IMR-90 (cell line): ENCODE measurements at regions of chr15 and their contacts with region 1.

Region 1: DNA sequence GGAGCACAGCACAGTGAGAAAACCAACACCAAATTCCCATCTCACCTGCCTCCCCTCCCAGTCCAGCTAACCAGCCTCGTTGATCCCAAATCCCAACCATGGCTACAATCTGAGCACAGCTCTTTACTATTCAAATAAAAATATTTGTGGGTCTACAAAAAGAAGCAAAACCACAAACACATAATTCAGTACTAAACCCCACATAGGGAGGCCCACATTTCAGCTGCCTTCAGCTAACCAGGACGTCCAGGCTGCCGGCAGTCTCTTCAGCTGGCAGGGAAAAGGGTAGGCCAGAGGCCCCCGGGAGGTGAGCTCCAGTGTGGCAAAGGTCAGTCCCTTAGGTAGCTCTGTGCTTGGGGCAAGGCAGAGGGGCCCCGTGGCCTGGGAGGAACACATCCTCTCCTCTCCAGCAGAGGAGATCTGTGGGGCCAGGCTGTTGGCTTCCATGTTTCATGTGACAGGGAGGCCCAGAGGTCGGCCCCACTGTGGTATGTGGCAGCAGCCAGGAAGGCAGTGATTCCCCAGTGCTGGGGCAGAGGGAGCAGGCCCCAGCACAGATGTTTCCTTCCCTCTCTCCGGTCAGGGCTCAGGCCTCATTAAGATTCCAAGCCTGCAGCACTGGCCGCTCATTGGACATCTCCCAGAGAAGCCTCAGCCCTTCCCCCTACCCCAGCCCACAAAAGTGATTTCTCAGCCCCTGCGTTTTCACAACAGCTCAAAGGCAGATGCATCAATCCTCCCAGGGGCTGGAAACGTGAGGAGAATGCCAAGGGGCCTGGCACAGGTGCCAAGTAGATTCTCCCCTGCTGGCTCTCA is 381.4 kb downstream of the NTRK3 start:
- DNase-seq: peak; percentile 65
- ATAC-seq: peak; percentile 66
- H3K4me3 ChIP-seq: no peak overlapping the region
- H3K27ac ChIP-seq: peak overlapping the region; percentile 51; the same call in 1 of the 2 replicates
- H3K4me1 ChIP-seq: peaks cover 34% of the 10 kb centered on the region
- H3K27me3 ChIP-seq: no peaks in the 10 kb centered on the region
- CTCF ChIP-seq: no peak
- POLR2A ChIP-seq: no peak
- RAD21 ChIP-seq: no peak

Region 2: DNA sequence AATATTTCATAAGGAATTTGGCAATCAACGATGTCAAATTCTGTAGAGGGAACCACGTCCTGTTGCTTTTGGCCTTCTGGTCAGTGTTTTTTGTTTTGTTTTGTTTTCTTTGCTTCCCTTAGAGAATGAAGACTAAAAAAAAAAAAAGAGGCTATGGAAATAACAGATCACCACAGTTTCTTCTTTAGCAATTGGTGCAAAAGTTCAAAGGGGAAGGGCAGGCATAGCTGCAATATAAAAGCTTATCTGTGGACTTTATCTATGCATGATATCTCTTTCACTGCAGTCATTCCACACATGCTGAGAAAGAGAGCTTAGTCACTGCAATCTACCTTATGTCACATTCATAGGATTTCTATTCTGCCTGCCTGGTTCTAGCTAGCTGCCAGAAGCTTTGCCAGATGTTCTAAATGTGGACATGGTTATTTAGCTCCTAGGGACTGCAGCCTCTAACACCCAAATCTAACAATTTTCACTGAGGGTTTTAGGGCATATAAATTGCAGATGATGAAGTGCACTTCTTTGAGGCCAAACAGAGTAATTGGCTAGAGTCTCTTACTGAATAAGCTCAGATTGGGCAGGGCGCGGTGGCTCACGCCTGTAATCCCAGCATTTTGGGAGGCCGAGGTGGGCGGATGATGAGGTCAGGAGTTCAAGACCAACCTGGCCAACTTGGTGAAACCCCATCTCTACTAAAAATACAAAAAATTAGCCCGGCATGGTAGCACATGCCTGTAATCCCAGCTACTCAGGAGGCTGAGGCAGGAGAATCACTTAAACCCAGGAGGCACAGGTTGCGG is 255.7 kb before region 1 on chr15:
- CTCF ChIA-PET with region 1: no interaction called
- POLR2A ChIA-PET with region 1: no interaction called
- dilution Hi-C with region 1: no loop called
- in situ Hi-C with region 1: no loop called
- intact Hi-C with region 1: loop called (anchors 10 kb)
- DNase-seq: peak; percentile 44
- ATAC-seq: peak; percentile 68
- H3K4me3 ChIP-seq: no peak overlapping the region
- H3K27ac ChIP-seq: no peak overlapping the region
- H3K4me1 ChIP-seq: no peaks in the 10 kb centered on the region
- H3K27me3 ChIP-seq: no peaks in the 10 kb centered on the region
- CTCF ChIP-seq: no peak
- POLR2A ChIP-seq: no peak
- RAD21 ChIP-seq: no peak

Region 3: GRCh38 chr15:87752250-87752951 is 122.7 kb before region 1 on chr15:
- CTCF ChIA-PET with region 1: no interaction called
- POLR2A ChIA-PET with region 1: no interaction called
- dilution Hi-C with region 1: no loop called
- in situ Hi-C with region 1: no loop called
- intact Hi-C with region 1: loop called (anchors 2 kb)
- DNase-seq: peak; percentile 93
- ATAC-seq: peak; percentile 84
- H3K4me3 ChIP-seq: no peak overlapping the region
- H3K27ac ChIP-seq: peak overlapping the region; percentile 45; the same call in 1 of the 2 replicates
- H3K4me1 ChIP-seq: peaks cover 14% of the 10 kb centered on the region
- H3K27me3 ChIP-seq: no peaks in the 10 kb centered on the region
- CTCF ChIP-seq: no peak
- POLR2A ChIP-seq: no peak
- RAD21 ChIP-seq: no peak

Region 4: DNA sequence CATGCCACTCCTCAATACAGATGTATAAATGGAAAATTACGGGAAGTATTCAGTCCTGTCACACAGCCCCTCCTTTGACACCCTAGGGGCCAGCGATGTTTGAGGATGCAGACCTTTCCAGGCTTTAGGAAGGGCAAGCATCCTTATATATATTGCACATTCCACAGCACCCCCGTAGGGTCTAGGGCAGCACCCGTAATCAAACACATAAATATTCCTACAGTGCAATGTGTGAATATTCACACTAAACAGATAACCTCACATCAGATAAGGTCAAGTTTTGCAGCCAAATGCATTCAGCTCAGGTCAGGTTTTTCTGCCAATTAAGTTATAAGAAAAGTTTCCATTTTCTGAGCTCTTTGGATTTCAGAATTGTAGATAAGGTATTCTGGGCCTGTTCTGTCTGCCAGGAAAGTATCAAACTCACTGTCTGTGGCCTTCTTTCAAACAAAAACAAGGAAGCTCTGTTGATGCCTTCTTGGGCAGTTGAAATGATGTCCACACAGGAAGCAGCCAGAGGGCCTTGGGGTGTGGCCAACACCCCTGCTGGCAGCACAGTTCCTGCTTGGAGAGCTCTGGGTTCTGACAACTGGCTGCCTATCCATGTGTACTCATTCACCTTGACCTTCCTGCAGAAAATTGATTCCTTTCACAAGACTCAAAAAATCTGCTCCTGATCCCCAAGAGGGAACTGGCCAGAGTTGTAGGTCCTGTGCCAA is 45.6 kb before region 1 on chr15:
- CTCF ChIA-PET with region 1: no interaction called
- POLR2A ChIA-PET with region 1: no interaction called
- dilution Hi-C with region 1: no loop called
- in situ Hi-C with region 1: no loop called
- intact Hi-C with region 1: no loop called
- DNase-seq: no peak
- ATAC-seq: no peak
- H3K4me3 ChIP-seq: no peak overlapping the region
- H3K27ac ChIP-seq: no peak overlapping the region
- H3K4me1 ChIP-seq: no peaks in the 10 kb centered on the region
- H3K27me3 ChIP-seq: no peaks in the 10 kb centered on the region
- CTCF ChIP-seq: no peak
- POLR2A ChIP-seq: no peak
- RAD21 ChIP-seq: no peak